Activated CD8-positive, alpha-beta T cell treated with anti-CD3 and anti-CD28 coated beads for 36 hours (primary cell): ENCODE measurements at regions of chr5 and their contacts with region 1.

Region 1: GRCh38 chr5:170293273-170293672 is 4.3 kb downstream of the LCP2 start:
- DNase-seq: peak; percentile 89
- ATAC-seq: peak; percentile 43
- H3K4me3 Mint-ChIP-seq: peak overlapping the region; percentile 97
- H3K27ac Mint-ChIP-seq: peak overlapping the region; percentile 96
- H3K4me1 Mint-ChIP-seq: peaks cover 61% of the 10 kb centered on the region
- H3K27me3 Mint-ChIP-seq: no peaks in the 10 kb centered on the region
- CTCF ChIP-seq: no peak

Region 2: GRCh38 chr5:169914766-169915165 is 378.5 kb before region 1 on chr5:
- CTCF ChIA-PET with region 1: no interaction called
- POLR2A ChIA-PET with region 1: no interaction called
- intact Hi-C with region 1: no loop called
- DNase-seq: no peak
- ATAC-seq: no peak
- H3K4me3 Mint-ChIP-seq: no peak overlapping the region
- H3K27ac Mint-ChIP-seq: no peak overlapping the region
- H3K4me1 Mint-ChIP-seq: no peaks in the 10 kb centered on the region
- H3K27me3 Mint-ChIP-seq: no peaks in the 10 kb centered on the region
- CTCF ChIP-seq: no peak

Region 3: GRCh38 chr5:170262061-170263045 is 30.9 kb before region 1 on chr5:
- CTCF ChIA-PET with region 1: interaction called, 133 read pairs
- POLR2A ChIA-PET with region 1: interaction called, 150 read pairs
- intact Hi-C with region 1: loop called (anchors 5 kb)
- DNase-seq: peak; percentile 60
- ATAC-seq: peak; percentile 25
- H3K4me3 Mint-ChIP-seq: peak overlapping the region; percentile 47
- H3K27ac Mint-ChIP-seq: peak overlapping the region; percentile 96
- H3K4me1 Mint-ChIP-seq: peaks cover 91% of the 10 kb centered on the region
- H3K27me3 Mint-ChIP-seq: no peaks in the 10 kb centered on the region
- CTCF ChIP-seq: no peak

Region 4: DNA sequence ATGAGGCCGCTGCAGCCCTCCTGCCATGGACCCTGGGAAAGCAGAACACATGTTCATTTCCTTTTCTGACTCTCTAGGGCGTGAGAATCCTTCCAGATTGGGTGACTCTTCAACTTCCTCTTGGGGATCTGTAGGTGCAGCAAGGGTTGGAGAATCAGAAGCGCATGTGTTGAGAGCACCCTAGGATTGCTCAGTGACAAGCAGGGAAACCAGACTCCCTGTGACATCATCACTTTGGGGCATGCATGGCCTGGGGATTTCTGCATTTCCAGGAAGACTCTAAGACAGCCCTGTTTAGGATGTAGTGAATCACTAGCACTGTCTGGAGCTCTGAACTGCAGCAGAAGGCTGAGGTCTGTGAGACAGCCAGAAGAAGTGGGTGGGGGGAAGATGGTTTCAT is 19.4 kb after region 1 on chr5:
- CTCF ChIA-PET with region 1: interaction called, 11 read pairs
- POLR2A ChIA-PET with region 1: interaction called, 10 read pairs
- intact Hi-C with region 1: loop called (anchors 2 kb)
- DNase-seq: peak; percentile 82
- ATAC-seq: peak; percentile 91
- H3K4me3 Mint-ChIP-seq: peak overlapping the region; percentile 75
- H3K27ac Mint-ChIP-seq: peak overlapping the region; percentile 87
- H3K4me1 Mint-ChIP-seq: peaks cover 66% of the 10 kb centered on the region
- H3K27me3 Mint-ChIP-seq: no peaks in the 10 kb centered on the region
- CTCF ChIP-seq: no peak

Region 5: DNA sequence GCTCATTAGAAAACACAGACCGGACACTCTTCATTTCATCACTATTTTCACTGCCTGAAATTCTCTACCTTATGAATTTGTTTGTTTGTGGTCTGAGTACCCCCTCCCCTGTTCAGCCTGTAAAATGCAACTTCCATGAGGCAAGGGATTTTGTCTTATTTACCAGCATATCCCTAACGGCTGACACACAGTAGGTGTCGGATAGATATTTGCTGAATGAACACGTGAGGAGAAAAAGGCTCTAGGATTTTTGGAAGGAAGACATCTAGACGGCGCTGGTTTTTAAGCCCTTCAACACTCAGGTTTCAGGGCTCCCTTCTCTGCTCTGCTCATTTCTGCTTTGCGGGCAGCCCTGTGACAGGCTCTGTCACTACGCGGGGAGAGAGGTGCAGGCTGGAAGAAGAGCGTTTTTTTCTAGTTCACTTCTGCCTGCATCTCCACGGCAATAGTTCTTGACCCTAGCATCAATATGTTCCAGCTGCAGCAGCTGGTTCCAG is 54.9 kb after region 1 on chr5:
- CTCF ChIA-PET with region 1: no interaction called
- POLR2A ChIA-PET with region 1: no interaction called
- intact Hi-C with region 1: no loop called
- DNase-seq: no peak
- ATAC-seq: no peak
- H3K4me3 Mint-ChIP-seq: no peak overlapping the region
- H3K27ac Mint-ChIP-seq: no peak overlapping the region
- H3K4me1 Mint-ChIP-seq: no peaks in the 10 kb centered on the region
- H3K27me3 Mint-ChIP-seq: peaks cover 15% of the 10 kb centered on the region
- CTCF ChIP-seq: peak; percentile 23

Region 6: GRCh38 chr5:170388818-170389549 is 95.7 kb after region 1 on chr5 and contains the start of gene KCNMB1:
- CTCF ChIA-PET with region 1: no interaction called
- POLR2A ChIA-PET with region 1: no interaction called
- intact Hi-C with region 1: no loop called
- DNase-seq: no peak
- ATAC-seq: no peak
- H3K4me3 Mint-ChIP-seq: no peak within 1 kb of the TSS
- H3K27ac Mint-ChIP-seq: no peak within 1 kb of the TSS
- H3K4me1 Mint-ChIP-seq: peaks cover 10% of the 10 kb centered on the region
- H3K27me3 Mint-ChIP-seq: peaks cover 2% of the 10 kb centered on the region
- CTCF ChIP-seq: no peak
- total RNA-seq, gene KCNMB1: not detected

Region 7: GRCh38 chr5:170497100-170498038 is 204.1 kb after region 1 on chr5:
- CTCF ChIA-PET with region 1: no interaction called
- POLR2A ChIA-PET with region 1: no interaction called
- intact Hi-C with region 1: no loop called
- DNase-seq: no peak
- ATAC-seq: no peak
- H3K4me3 Mint-ChIP-seq: no peak overlapping the region
- H3K27ac Mint-ChIP-seq: no peak overlapping the region
- H3K4me1 Mint-ChIP-seq: no peaks in the 10 kb centered on the region
- H3K27me3 Mint-ChIP-seq: peaks cover 23% of the 10 kb centered on the region
- CTCF ChIP-seq: no peak